ENCODE measurements at regions of chr17 and their contacts with region 1.

Region 1: GRCh38 chr17:63827002-63827771 is at the starts of genes FTSJ3 and PSMC5:
- DNase-seq: peak; percentile 94 to 98 (median 98)
- ATAC-seq: peak; percentile 95
- H3K4me3 ChIP-seq: peak within 1 kb of the TSS; percentile 65
- H3K4me1 ChIP-seq: peaks cover 16% of the 10 kb centered on the region
- CTCF ChIP-seq: peak; percentile 50
- total RNA-seq, gene FTSJ3: 26.9 to 48.2 (median 29.4) TPM
- total RNA-seq, gene PSMC5: 73.3 to 151 (median 96.4) TPM

Region 2: GRCh38 chr17:63773381-63774140 is 53.6 kb before region 1 on chr17 and contains the start of gene CCDC47:
- intact Hi-C with region 1: loop called in 1 of 2 experiments (anchors 10 kb)
- DNase-seq: peak; percentile 99
- ATAC-seq: peak; percentile 89
- H3K4me3 ChIP-seq: peak within 1 kb of the TSS; percentile 90
- H3K4me1 ChIP-seq: peaks cover 31% of the 10 kb centered on the region
- CTCF ChIP-seq: no peak
- total RNA-seq, gene CCDC47: 94.9 to 139 (median 128) TPM

Measured in mucosa of descending colon (tissue), 3 donors.